OCI-LY7 (cell line): ENCODE measurements at regions of chr20 and their contacts with region 1.

Region 1: GRCh38 chr20:37534401-37535157 is 6.9 kb upstream of the BLCAP start:
- DNase-seq: peak; percentile 80
- H3K4me3 ChIP-seq: no peak overlapping the region
- H3K27ac ChIP-seq: no peak overlapping the region
- H3K4me1 ChIP-seq: peaks cover 8% of the 10 kb centered on the region
- CTCF ChIP-seq: peak; percentile 94

Region 2: DNA sequence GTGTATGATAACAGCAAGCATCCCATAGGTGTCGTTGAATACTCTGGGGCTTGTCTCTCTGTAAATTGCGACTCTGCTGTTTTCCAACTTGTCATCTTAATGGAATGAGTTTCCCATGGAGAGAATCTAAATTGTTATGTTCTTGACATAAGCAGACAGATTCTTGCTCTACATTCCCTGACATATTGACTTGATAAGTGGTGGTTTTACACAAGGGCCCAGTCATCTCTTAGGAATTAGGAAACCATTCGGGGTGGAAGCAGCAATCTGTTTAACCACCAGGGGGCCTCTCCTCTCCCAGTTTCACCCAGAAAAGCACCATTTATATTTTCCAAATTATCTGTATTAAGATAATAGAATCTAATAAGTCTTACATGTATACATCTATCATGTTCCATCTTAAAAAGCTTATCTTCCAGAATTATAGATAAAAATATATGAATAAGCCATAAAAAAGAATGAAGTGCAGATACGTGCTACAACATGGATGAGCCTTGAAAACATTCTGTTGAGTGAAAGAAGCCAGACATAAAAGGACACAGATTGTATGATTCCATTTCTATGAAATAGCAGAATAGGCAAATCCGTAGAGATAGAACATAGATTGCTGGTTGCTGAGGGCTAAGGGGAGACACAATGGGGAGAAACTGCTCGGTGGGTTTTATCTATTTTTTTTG is 332.2 kb before region 1 on chr20:
- CTCF ChIA-PET with region 1: no interaction called
- POLR2A ChIA-PET with region 1: no interaction called
- intact Hi-C with region 1: loop called (anchors 5 kb)
- DNase-seq: peak; percentile 32
- H3K4me3 ChIP-seq: no peak overlapping the region
- H3K27ac ChIP-seq: no peak overlapping the region
- H3K4me1 ChIP-seq: no peaks in the 10 kb centered on the region
- CTCF ChIP-seq: peak; percentile 92

Region 3: GRCh38 chr20:37270576-37271420 is 263.8 kb before region 1 on chr20:
- CTCF ChIA-PET with region 1: interaction called, 4 read pairs
- POLR2A ChIA-PET with region 1: interaction called, 3 read pairs
- intact Hi-C with region 1: loop called (anchors 1 kb)
- DNase-seq: no peak
- H3K4me3 ChIP-seq: no peak overlapping the region
- H3K27ac ChIP-seq: no peak overlapping the region
- H3K4me1 ChIP-seq: peaks cover 51% of the 10 kb centered on the region
- CTCF ChIP-seq: no peak

Region 4: DNA sequence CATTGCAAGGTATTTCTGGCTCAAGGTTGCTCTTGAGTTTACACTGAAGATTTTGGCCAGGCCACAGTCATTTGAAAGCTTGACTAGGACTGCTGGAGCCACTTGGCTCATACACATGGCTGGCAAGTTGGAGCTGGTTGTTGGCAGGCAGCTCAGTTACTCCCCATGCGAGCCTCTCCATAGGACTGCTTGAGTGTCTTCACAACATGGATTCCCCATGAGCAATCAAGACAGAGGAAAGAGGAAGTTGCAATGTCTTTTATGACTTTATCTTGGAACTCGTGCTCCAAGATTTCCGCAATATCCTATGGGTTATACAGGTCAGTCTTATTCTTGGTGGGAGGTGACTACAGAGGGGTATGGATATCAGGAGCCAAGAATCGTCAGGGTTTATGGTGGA is 246.5 kb before region 1 on chr20:
- CTCF ChIA-PET with region 1: no interaction called
- POLR2A ChIA-PET with region 1: no interaction called
- intact Hi-C with region 1: no loop called
- DNase-seq: no peak
- H3K4me3 ChIP-seq: no peak overlapping the region
- H3K27ac ChIP-seq: no peak overlapping the region
- H3K4me1 ChIP-seq: peaks cover 24% of the 10 kb centered on the region
- CTCF ChIP-seq: no peak

Region 5: GRCh38 chr20:37392421-37393178 is 142.0 kb before region 1 on chr20:
- CTCF ChIA-PET with region 1: no interaction called
- POLR2A ChIA-PET with region 1: no interaction called
- intact Hi-C with region 1: loop called (anchors 1 kb)
- DNase-seq: peak; percentile 60
- H3K4me3 ChIP-seq: no peak overlapping the region
- H3K27ac ChIP-seq: no peak overlapping the region
- H3K4me1 ChIP-seq: no peaks in the 10 kb centered on the region
- CTCF ChIP-seq: peak; percentile 76